A549 (cell line): ENCODE measurements at regions of chr1 and their contacts with region 1.

Region 1: GRCh38 chr1:206106328-206107167 is 10.6 kb downstream of the AVPR1B start:
- DNase-seq: peak; percentile 71 to 81
- ATAC-seq: peak; percentile 87 to 98
- H3K4me3 ChIP-seq: no peak overlapping the region
- H3K27ac ChIP-seq: no peak overlapping the region
- H3K4me1 ChIP-seq: no peaks in the 10 kb centered on the region
- CTCF ChIP-seq: peak; percentile 92
- EP300 ChIP-seq: no peak
- POLR2A ChIP-seq: no peak
- RAD21 ChIP-seq: peak; percentile 90 to 94

Region 2: DNA sequence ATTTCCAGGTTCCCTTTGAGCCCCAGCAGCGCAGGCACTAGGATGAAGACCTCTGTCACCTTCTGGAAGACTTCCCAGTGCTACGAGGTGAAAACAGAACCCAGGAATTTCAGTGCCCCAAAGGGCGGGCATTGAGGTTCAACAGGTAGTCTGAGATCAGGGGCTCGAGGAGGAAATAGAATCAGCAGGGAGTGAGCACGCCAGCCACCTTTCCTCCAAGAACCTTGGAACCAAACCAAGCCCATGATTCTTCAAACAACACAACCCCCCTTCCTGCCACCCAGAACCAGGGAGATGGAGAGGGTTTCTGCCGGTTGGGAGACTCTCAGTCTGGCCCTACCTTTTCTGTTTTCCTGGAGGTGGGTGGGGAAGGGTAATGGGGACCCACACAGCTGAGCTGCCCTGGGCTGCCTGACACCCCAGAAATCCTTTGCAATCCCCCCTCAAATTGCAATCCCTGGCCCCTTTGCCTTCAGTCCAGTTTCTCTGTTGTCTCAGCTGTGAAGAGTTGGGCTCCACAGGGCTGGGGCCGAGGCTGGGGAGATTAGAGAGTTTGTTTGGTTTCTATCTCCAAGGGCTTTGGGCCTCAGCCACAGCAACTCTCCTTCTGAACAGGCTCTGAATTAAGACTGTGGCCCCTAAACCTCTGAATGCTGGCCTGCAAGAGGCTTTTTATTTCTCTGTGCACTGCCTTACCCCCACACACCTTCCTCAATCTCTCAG is 305.4 kb before region 1 on chr1:
- CTCF ChIA-PET with region 1: no interaction called
- POLR2A ChIA-PET with region 1: no interaction called
- DNase-seq: no peak
- ATAC-seq: no peak
- H3K4me3 ChIP-seq: no peak overlapping the region
- H3K27ac ChIP-seq: no peak overlapping the region
- H3K4me1 ChIP-seq: no peaks in the 10 kb centered on the region
- CTCF ChIP-seq: no peak
- EP300 ChIP-seq: no peak
- POLR2A ChIP-seq: no peak
- RAD21 ChIP-seq: no peak

Region 3: DNA sequence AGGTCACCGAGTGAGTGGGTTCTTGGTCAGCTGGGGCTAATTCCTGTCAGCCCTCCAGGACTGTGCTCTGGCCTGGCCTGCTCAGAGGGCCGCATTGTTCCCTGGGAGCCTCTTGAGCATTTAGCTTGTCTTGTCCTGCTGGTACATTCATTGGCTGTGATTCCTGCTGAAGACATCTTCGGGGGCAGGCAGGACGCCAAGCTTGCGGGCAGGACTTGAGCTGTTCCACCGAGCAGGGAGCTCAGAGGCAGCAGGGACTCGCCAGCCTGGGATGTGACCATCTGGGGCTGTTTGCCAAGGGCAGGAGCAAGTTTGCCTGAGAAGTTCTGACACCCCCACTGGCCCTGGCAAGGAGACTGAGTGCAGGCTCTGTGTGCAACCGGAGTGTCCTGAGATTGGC is 156.3 kb before region 1 on chr1:
- CTCF ChIA-PET with region 1: no interaction called
- POLR2A ChIA-PET with region 1: no interaction called
- DNase-seq: no peak
- ATAC-seq: no peak
- H3K4me3 ChIP-seq: no peak overlapping the region
- H3K27ac ChIP-seq: no peak overlapping the region
- H3K4me1 ChIP-seq: no peaks in the 10 kb centered on the region
- CTCF ChIP-seq: no peak
- EP300 ChIP-seq: no peak
- POLR2A ChIP-seq: no peak
- RAD21 ChIP-seq: no peak

Region 4: GRCh38 chr1:206081856-206082255 is 24.7 kb before region 1 on chr1:
- CTCF ChIA-PET with region 1: interaction called, 16 read pairs
- POLR2A ChIA-PET with region 1: no interaction called
- DNase-seq: no peak
- ATAC-seq: no peak
- H3K4me3 ChIP-seq: no peak overlapping the region
- H3K27ac ChIP-seq: no peak overlapping the region
- H3K4me1 ChIP-seq: no peaks in the 10 kb centered on the region
- CTCF ChIP-seq: no peak
- EP300 ChIP-seq: no peak
- POLR2A ChIP-seq: no peak
- RAD21 ChIP-seq: no peak

Region 5: DNA sequence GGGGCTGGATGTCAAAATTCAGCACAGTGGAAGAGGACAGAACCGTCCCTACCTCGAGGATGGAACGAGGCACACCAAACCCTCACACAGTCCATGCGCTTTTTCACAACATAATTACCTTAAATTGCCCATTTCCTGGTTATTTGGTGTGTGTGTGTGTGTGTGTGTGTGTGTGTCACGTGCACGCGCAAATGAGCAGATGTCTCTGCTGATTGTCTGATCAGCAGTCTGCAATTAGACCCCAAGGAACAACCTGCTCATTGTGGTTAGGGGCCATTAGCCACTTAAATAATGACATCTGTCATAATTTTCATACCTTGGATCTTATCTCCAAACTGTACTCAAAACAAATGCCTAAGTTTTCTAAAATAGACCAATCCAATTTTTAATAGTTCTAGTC is 12.5 kb before region 1 on chr1:
- CTCF ChIA-PET with region 1: interaction called, 10 read pairs
- POLR2A ChIA-PET with region 1: no interaction called
- DNase-seq: no peak
- ATAC-seq: no peak
- H3K4me3 ChIP-seq: no peak overlapping the region
- H3K27ac ChIP-seq: no peak overlapping the region
- H3K4me1 ChIP-seq: no peaks in the 10 kb centered on the region
- CTCF ChIP-seq: no peak
- EP300 ChIP-seq: no peak
- POLR2A ChIP-seq: no peak
- RAD21 ChIP-seq: no peak

Region 6: DNA sequence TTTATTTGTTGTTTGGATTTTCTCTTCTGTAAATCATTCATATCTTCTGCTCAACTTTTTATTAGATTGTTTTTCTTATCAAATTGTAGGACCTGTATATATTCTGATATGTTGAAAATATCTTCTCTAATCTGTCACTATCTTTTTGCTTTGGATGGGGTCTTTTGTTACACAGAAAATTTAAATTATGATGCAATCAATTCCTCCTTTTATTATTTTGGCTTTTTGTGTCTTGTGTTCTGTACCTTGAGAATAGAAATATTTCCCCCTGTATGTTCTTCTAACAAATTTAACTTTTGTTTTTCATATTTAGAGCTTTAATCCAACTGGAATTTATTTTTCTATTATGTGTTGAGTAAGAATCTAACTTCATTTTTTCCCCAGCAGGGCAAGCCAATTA is 13.9 kb after region 1 on chr1:
- CTCF ChIA-PET with region 1: interaction called, 12 read pairs
- POLR2A ChIA-PET with region 1: no interaction called
- DNase-seq: no peak
- ATAC-seq: no peak
- H3K4me3 ChIP-seq: no peak overlapping the region
- H3K27ac ChIP-seq: no peak overlapping the region
- H3K4me1 ChIP-seq: peaks cover 4% of the 10 kb centered on the region; the same call in 2 of the 3 replicates
- CTCF ChIP-seq: no peak
- EP300 ChIP-seq: no peak
- POLR2A ChIP-seq: no peak
- RAD21 ChIP-seq: no peak